ENCODE measurements at regions of chr9 and their contacts with region 1.

Region 1: GRCh38 chr9:14768405-14769229 is 46.1 kb upstream of the CER1 start:
- DNase-seq: peak; percentile 77
- H3K4me3 ChIP-seq: no peak overlapping the region
- H3K27ac ChIP-seq: no peak overlapping the region
- H3K4me1 ChIP-seq: peaks cover 3% of the 10 kb centered on the region
- H3K27me3 ChIP-seq: no peaks in the 10 kb centered on the region
- CTCF ChIP-seq: peak; percentile 44 to 47
- POLR2A ChIP-seq: no peak

Region 2: DNA sequence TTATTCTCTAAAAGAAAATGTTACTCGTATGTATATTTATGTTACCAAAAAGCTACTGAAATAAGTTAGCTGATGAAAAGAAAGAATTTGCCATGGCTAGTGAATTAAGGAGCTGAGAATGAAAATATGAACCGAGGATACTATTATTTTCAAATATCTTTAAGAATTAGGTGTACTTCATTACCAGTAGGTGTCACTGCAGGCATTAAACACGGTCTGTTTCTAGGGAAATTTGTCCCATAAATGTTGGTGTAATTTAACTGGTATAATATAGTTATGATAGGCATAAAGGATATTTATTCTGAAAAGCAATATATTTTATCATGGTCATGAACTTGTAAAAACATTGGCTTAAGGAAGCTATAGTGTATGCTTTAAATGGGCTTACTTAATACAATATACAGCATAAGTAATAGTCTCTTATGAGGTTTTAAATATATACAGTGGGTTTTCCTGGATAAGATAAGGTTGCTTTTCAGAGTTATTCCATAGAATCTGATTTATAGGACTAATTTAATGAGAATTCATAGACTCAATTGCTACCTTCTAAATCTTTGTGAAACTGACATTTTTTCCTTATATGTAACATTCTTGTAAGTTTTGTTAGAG is 1416.7 kb before region 1 on chr9:
- CTCF ChIA-PET with region 1: interaction called, 8 read pairs
- POLR2A ChIA-PET with region 1: no interaction called
- dilution Hi-C with region 1: no loop called
- intact Hi-C with region 1: loop called (anchors 2 kb)
- DNase-seq: peak; percentile 74
- H3K4me3 ChIP-seq: no peak overlapping the region
- H3K27ac ChIP-seq: no peak overlapping the region
- H3K4me1 ChIP-seq: no peaks in the 10 kb centered on the region
- H3K27me3 ChIP-seq: no peaks in the 10 kb centered on the region
- CTCF ChIP-seq: peak; percentile 32 to 37
- POLR2A ChIP-seq: no peak

Region 3: DNA sequence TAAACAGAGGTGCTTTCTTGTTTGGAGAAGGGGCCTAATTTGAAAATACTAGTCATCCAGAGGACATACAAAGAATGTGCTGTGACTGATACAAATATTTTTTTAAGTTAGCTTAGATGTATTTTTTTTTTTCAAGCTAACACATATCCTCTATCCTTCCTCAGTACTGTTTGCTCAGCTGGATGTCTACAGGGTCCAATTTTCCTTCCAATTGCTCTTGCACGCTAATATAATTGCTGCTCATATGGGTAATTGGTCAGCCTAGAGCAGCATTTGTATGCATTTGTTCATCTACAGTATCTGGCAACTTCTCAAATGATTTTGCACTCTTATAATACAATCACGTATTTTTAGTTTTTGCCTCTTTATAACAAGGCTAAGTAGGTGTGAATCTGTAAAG is 160.1 kb before region 1 on chr9:
- CTCF ChIA-PET with region 1: interaction called, 19 read pairs
- POLR2A ChIA-PET with region 1: no interaction called
- dilution Hi-C with region 1: no loop called
- intact Hi-C with region 1: no loop called
- DNase-seq: peak; percentile 82
- H3K4me3 ChIP-seq: no peak overlapping the region
- H3K27ac ChIP-seq: no peak overlapping the region
- H3K4me1 ChIP-seq: no peaks in the 10 kb centered on the region
- H3K27me3 ChIP-seq: no peaks in the 10 kb centered on the region
- CTCF ChIP-seq: no peak
- POLR2A ChIP-seq: no peak

Region 4: DNA sequence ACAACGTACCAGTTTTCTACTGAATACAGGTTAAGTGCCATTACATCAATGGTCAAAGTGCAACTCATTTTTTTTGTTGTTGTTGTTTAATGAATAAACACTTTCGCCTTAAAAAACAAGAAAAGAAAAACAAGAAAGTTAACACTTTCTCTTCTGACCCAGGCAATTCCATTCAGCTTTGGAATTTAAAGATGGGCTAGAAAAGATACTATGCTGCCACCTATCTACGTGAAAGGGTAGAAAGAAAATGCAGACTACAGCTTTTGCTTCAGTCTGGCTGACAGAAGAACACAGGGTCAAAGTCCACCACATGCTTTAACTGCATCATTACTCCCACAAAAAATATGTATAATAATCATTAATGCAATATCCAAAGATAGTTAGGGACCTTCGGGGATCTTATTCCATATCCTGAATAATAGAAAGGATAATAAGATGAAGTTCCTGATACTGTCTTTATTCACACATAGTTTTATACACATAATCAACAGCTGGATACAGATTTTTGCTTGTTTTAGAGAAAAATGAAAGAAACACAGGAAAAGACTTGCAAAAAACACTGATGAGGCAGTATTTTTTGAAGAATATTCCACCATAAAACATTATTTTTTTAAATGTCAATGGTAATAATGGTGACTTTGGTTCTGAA is 115.8 kb before region 1 on chr9:
- CTCF ChIA-PET with region 1: interaction called, 23 read pairs
- POLR2A ChIA-PET with region 1: no interaction called
- dilution Hi-C with region 1: no loop called
- intact Hi-C with region 1: no loop called
- DNase-seq: peak; percentile 54
- H3K4me3 ChIP-seq: no peak overlapping the region
- H3K27ac ChIP-seq: no peak overlapping the region
- H3K4me1 ChIP-seq: no peaks in the 10 kb centered on the region
- H3K27me3 ChIP-seq: no peaks in the 10 kb centered on the region
- CTCF ChIP-seq: peak; percentile 29 to 30
- POLR2A ChIP-seq: no peak

Region 5: DNA sequence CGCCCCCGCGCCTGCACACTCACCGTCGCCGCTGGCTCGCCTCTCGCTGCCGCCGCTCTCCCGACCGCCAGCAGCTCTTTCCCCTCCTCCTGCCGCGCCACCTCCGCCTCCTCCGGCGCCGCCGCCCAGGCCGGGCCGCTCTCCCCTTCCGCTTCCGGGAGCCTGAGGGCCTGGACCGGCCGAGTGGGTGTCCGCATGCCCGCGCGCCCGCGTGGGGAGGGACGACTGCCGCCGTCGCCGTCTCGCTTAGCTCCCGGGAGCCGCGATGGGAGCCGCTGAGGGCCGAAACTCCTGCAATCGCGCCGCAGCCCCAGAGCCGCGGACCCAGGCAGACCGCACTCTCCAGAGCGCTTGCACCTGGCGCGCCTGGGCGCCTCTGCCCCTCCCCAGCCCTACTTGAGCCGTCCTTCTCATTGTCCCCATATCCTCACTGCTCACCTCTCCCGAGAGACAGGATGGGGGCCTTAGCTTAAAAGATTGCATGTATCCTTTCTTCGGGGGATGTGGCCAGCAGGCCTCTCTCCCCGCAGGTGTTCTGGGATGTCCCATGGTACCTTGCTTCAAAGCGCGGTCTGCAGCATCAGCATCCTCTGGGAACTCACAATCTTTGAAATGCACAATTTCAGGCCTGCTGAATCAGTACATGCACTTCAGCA is 75.3 kb before region 1 on chr9 and contains the start of gene ZDHHC21:
- CTCF ChIA-PET with region 1: interaction called, 12 read pairs
- POLR2A ChIA-PET with region 1: no interaction called
- dilution Hi-C with region 1: no loop called
- intact Hi-C with region 1: loop called (anchors 1 kb)
- DNase-seq: peak; percentile 51
- H3K4me3 ChIP-seq: peak within 1 kb of the TSS; percentile 77 to 97 (median 89)
- H3K27ac ChIP-seq: peak within 1 kb of the TSS; percentile 63
- H3K4me1 ChIP-seq: peaks cover 23% of the 10 kb centered on the region
- H3K27me3 ChIP-seq: no peaks in the 10 kb centered on the region
- CTCF ChIP-seq: no peak
- POLR2A ChIP-seq: peak; percentile 78
- total RNA-seq, gene ZDHHC21: 21.0 and 25.9 TPM in 2 replicates

Region 6: GRCh38 chr9:14956208-14956607 is 187.6 kb after region 1 on chr9:
- CTCF ChIA-PET with region 1: no interaction called
- POLR2A ChIA-PET with region 1: no interaction called
- dilution Hi-C with region 1: no loop called
- intact Hi-C with region 1: no loop called
- DNase-seq: no peak
- H3K4me3 ChIP-seq: no peak overlapping the region
- H3K27ac ChIP-seq: no peak overlapping the region
- H3K4me1 ChIP-seq: peaks cover 5% of the 10 kb centered on the region
- H3K27me3 ChIP-seq: no peaks in the 10 kb centered on the region
- CTCF ChIP-seq: no peak
- POLR2A ChIP-seq: no peak